ENCODE measurements at regions of chr13 and their contacts with region 1.

Region 1: GRCh38 chr13:75489502-75490263 is 7.7 kb upstream of the TBC1D4 start:
- DNase-seq: peak; percentile 60
- H3K4me3 Mint-ChIP-seq: no peak overlapping the region
- H3K27ac Mint-ChIP-seq: peak overlapping the region; percentile 71
- H3K4me1 Mint-ChIP-seq: peaks cover 38% of the 10 kb centered on the region
- H3K27me3 Mint-ChIP-seq: peaks cover 15% of the 10 kb centered on the region

Region 2: GRCh38 chr13:75530536-75530935 is 40.9 kb after region 1 on chr13:
- intact Hi-C with region 1: no loop called
- DNase-seq: no peak
- H3K4me3 Mint-ChIP-seq: no peak overlapping the region
- H3K27ac Mint-ChIP-seq: peak overlapping the region; percentile 41
- H3K4me1 Mint-ChIP-seq: peaks cover 30% of the 10 kb centered on the region
- H3K27me3 Mint-ChIP-seq: no peaks in the 10 kb centered on the region

Region 3: GRCh38 chr13:75635828-75636435 is 146.2 kb after region 1 on chr13 and contains the start of gene LMO7:
- intact Hi-C with region 1: loop called (anchors 5 kb)
- DNase-seq: peak; percentile 84
- H3K4me3 Mint-ChIP-seq: peak within 1 kb of the TSS; percentile 79
- H3K27ac Mint-ChIP-seq: no peak within 1 kb of the TSS
- H3K4me1 Mint-ChIP-seq: peaks cover 14% of the 10 kb centered on the region
- H3K27me3 Mint-ChIP-seq: peaks cover 21% of the 10 kb centered on the region
- total RNA-seq, gene LMO7: 4.3 and 5.8 TPM in 2 replicates